Activated CD4-positive, alpha-beta T cell treated with anti-CD3 and anti-CD28 coated beads, Interleukin-2, amount 10 ng/mL, durations not matched to agents 24 days and 14 days (primary cell): ENCODE measurements at regions of chr3 and their contacts with region 1.

Region 1: GRCh38 chr3:56988458-56989168 is 71.9 kb upstream of the SPATA12 start:
- DNase-seq: peak; percentile 91
- H3K4me3 Mint-ChIP-seq: no peak overlapping the region
- H3K27ac Mint-ChIP-seq: no peak overlapping the region
- H3K4me1 Mint-ChIP-seq: peaks cover 30% of the 10 kb centered on the region
- H3K27me3 Mint-ChIP-seq: peaks cover 26% of the 10 kb centered on the region

Region 2: DNA sequence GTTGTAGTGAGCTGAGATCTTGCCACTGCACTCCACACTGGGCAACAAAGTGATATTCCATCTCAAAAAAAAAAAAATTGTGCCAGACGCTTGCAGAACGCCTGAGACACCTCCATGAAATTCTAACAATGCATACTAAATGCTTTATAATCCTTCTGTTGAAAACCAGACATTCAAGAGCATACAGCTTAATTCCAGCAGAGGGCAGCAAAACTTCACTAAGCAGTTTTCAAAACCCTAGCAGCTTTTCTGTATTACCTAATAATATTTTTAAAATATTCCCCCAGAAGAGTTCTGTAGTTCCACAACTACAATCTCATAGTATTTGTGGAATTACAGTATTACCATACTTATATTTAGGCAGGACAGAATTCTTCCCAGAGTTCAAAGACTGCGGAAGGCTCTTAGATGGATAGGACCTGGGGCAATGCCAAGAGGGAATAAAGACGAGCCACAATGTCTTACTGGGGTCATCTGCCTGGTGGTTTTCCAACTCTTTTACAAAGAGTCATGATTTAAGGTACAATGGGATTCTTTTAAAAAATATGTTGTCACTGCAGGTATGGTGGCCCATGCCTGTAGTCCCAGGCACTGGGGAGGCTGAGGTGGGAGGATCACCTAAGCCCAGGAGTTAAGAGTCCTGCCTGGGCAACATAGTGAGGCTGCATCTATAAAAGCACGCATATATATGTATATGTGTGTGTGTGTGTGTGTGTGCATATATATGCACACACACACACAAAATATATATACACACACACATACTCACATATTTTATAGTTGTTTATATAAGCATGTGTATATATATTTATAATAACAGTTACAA is 285.9 kb before region 1 on chr3:
- intact Hi-C with region 1: loop called (anchors 1 kb)
- DNase-seq: peak; percentile 87
- H3K4me3 Mint-ChIP-seq: no peak overlapping the region
- H3K27ac Mint-ChIP-seq: no peak overlapping the region
- H3K4me1 Mint-ChIP-seq: peaks cover 27% of the 10 kb centered on the region
- H3K27me3 Mint-ChIP-seq: no peaks in the 10 kb centered on the region

Region 3: DNA sequence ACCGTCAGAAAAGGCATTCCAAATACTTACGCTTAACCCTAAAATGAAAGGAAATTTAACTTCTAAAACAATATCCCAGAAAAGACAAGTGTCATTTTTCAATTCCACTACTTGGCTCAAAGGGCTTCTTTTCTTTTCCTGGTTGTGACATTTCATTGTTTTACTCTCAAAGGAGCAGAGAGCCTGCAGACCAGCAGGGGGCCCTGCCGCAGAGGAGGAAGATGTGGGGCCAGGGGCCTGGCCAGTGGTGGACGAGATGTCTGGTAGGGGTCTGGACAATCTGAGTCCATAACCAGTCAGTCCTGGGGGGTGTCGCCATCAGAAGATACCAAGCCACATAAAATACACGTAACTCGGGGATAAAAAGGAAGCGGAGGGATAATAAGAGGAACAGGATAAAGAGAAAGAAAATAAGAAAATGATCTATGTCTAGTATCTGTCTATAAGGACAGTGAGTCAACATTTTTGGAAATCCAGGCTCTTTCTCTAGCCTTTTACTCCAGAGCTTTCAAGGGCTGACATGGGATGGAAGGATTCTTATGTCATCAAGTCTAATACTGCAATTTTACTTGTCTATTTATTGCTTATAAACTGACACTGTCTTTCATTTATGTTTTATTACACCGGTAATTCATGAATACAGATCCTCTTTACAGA is 132.6 kb before region 1 on chr3:
- intact Hi-C with region 1: loop called (anchors 2 kb)
- DNase-seq: peak; percentile 76
- H3K4me3 Mint-ChIP-seq: no peak overlapping the region
- H3K27ac Mint-ChIP-seq: peak overlapping the region; percentile 65
- H3K4me1 Mint-ChIP-seq: peaks cover 51% of the 10 kb centered on the region
- H3K27me3 Mint-ChIP-seq: no peaks in the 10 kb centered on the region

Region 4: DNA sequence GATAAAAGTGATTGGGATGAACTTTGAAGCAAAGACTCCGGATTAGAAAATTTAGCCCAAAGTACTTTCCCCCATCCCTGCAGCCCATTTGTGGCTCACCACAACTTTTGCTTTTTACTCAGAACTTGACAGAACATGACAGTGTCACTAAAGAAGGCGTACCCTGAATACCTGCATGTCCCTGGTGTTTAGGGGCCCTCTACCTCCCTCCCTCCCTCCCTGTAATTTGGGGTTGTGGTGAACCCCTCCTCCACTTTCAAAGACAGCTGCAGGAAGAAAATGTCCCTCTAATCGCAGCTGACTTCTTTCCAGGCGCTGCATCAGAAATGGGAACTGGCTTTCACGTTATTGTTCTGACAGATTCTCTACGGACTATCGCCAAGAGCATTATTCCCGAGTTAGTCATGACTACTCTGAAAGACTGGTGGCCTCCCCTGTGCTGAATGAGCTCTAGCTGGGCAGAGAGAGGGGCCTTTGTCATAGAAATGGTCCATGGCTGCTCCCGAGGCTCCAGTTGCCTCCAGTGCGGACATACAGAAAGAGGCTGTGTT is 93.7 kb before region 1 on chr3:
- intact Hi-C with region 1: no loop called
- DNase-seq: peak; percentile 70
- H3K4me3 Mint-ChIP-seq: no peak overlapping the region
- H3K27ac Mint-ChIP-seq: peak overlapping the region; percentile 45
- H3K4me1 Mint-ChIP-seq: peaks cover 43% of the 10 kb centered on the region
- H3K27me3 Mint-ChIP-seq: no peaks in the 10 kb centered on the region

Region 5: GRCh38 chr3:57206423-57206822 is 217.8 kb after region 1 on chr3:
- intact Hi-C with region 1: no loop called
- DNase-seq: no peak
- H3K4me3 Mint-ChIP-seq: no peak overlapping the region
- H3K27ac Mint-ChIP-seq: no peak overlapping the region
- H3K4me1 Mint-ChIP-seq: peaks cover 2% of the 10 kb centered on the region
- H3K27me3 Mint-ChIP-seq: peaks cover 3% of the 10 kb centered on the region